Dendritic cell treated with granulocyte-macrophage colony-stimulating factor and Interleukin-4, amounts not matched to agents 40 ng/mL and 50 ng/mL, for 4 days (primary cell): ENCODE measurements at regions of chr10 and their contacts with region 1.

Region 1: GRCh38 chr10:42753126-42753506 is 29.5 kb upstream of the BMS1 start:
- H3K4me3 Mint-ChIP-seq: peak overlapping the region; percentile 86
- H3K27ac Mint-ChIP-seq: no peak overlapping the region
- H3K4me1 Mint-ChIP-seq: peaks cover 20% of the 10 kb centered on the region
- H3K27me3 Mint-ChIP-seq: peaks cover 86% of the 10 kb centered on the region

Region 2: DNA sequence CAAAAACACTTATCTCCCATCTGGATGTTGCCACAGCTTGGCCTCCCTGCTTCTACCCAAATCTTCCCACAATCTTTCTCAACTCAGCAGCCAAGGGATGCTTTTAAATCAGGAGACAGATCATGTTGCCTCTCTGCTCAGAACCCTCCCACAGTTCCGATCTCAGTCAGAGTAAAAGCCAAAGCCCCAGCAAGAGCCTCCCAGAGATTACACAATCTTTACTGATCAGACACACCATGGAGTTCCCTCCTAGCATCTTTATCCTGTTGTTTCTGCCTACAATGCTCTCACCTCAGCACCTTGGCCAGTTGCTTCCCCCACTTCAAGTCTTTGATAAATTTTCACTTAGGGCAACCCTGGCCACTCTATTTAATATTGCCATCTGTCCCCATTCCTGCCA is 72.8 kb before region 1 on chr10:
- intact Hi-C with region 1: no loop called
- H3K4me3 Mint-ChIP-seq: no peak overlapping the region
- H3K27ac Mint-ChIP-seq: no peak overlapping the region
- H3K4me1 Mint-ChIP-seq: no peaks in the 10 kb centered on the region
- H3K27me3 Mint-ChIP-seq: no peaks in the 10 kb centered on the region

Region 3: GRCh38 chr10:42782446-42783180 is 29.5 kb after region 1 on chr10 and contains the start of gene BMS1:
- intact Hi-C with region 1: loop called (anchors 1 kb)
- H3K4me3 Mint-ChIP-seq: peak within 1 kb of the TSS; percentile 79
- H3K27ac Mint-ChIP-seq: peak within 1 kb of the TSS; percentile 86
- H3K4me1 Mint-ChIP-seq: peaks cover 6% of the 10 kb centered on the region
- H3K27me3 Mint-ChIP-seq: peaks cover 19% of the 10 kb centered on the region

Region 4: DNA sequence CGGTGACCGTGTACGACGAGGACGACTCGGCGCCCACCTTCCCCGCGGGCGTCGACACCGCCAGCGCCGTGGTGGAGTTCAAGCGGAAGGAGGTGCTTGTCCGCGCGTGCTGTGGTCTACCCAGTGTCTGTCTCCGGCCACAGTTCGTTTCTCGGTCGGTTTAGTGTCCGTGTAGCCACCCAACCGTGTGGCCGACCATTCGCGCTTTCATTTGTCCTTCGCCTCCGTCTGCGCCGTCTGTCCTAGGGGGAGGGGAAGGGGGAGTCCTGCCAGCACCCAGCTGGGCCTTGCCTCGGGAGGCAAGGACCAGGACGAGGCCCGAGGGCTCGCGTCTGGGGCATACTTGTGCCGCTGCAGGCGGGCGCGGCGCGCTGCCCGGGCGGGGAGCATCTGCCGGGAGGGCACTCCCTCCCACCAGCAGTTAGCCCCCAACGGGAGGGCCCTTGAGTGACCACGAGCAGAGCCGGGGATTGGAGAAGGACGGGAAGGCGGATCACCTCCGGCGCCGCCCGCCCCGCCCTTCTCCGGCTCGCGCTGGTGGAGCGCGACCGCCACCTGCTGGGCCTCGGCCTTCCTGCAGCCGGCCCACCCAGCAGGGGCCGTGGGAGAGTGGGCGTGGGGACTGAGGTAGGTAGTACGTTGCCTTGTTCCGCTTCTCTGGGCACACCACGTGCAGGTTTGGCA is 352.1 kb after region 1 on chr10:
- intact Hi-C with region 1: loop called (anchors 2 kb)
- H3K4me3 Mint-ChIP-seq: peak overlapping the region; percentile 75
- H3K27ac Mint-ChIP-seq: peak overlapping the region; percentile 75
- H3K4me1 Mint-ChIP-seq: peaks cover 46% of the 10 kb centered on the region
- H3K27me3 Mint-ChIP-seq: peaks cover 35% of the 10 kb centered on the region